Right cardiac atrium (tissue), 5 donors: ENCODE measurements at regions of chr15 and their contacts with region 1.

Region 1: GRCh38 chr15:73518180-73518862 is 75.4 kb downstream of the REC114 start:
- DNase-seq: peak in 2 of 3 donors; percentile 27 to 43
- ATAC-seq: no peak
- H3K4me3 ChIP-seq: no peak overlapping the region
- H3K27ac ChIP-seq: peak overlapping the region; percentile 97
- H3K4me1 ChIP-seq: no peaks in the 10 kb centered on the region
- H3K27me3 ChIP-seq: no peaks in the 10 kb centered on the region

Region 2: GRCh38 chr15:73375755-73376305 is 142.5 kb before region 1 on chr15:
- intact Hi-C with region 1: loop called in 1 of 4 experiments (anchors 10 kb)
- DNase-seq: peak in 2 of 3 donors; percentile 75 to 80
- ATAC-seq: peak; percentile 67 to 73
- H3K4me3 ChIP-seq: no peak overlapping the region
- H3K27ac ChIP-seq: peak overlapping the region; percentile 87
- H3K4me1 ChIP-seq: no peaks in the 10 kb centered on the region
- H3K27me3 ChIP-seq: no peaks in the 10 kb centered on the region

Region 3: GRCh38 chr15:73550190-73550589 is 31.9 kb after region 1 on chr15:
- intact Hi-C with region 1: no loop called
- DNase-seq: no peak
- ATAC-seq: no peak
- H3K4me3 ChIP-seq: no peak overlapping the region
- H3K27ac ChIP-seq: no peak overlapping the region
- H3K4me1 ChIP-seq: peaks cover 1% of the 10 kb centered on the region
- H3K27me3 ChIP-seq: no peaks in the 10 kb centered on the region

Region 4: DNA sequence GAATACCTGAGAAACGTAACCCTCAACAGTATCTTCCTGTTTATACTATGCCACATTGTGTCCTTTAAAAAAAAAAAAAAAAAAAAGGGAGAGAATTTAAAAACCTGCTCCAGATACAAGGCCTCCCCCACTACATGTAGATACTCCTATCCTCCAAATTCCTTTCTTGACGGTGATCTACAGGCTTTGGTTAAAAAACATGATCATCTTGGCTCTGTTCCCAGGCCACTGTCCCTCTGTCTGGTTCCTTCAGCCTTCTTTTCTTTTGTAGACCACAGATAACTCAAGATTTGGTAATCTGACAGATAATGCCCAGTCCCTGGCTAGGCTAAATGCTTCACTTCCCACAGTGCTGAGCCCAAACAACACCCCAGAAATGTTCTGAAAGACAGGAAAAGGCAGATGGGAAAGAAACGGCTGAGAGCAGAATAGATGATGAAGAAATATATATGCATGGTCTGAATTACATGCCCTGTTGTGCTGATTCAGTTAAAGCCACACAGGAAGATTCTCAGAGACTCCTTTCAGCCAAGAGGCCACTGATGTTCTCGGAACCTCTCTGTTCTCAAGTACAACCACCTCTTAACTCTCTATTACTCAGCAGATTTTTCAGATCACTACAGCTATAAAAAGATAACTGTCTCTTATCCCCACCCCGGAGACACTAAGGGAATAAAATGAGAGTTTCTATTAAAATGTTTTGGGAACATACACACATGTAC is 66.5 kb after region 1 on chr15:
- intact Hi-C with region 1: no loop called
- DNase-seq: no peak
- ATAC-seq: no peak
- H3K4me3 ChIP-seq: no peak overlapping the region
- H3K27ac ChIP-seq: no peak overlapping the region
- H3K4me1 ChIP-seq: no peaks in the 10 kb centered on the region
- H3K27me3 ChIP-seq: no peaks in the 10 kb centered on the region

Region 5: DNA sequence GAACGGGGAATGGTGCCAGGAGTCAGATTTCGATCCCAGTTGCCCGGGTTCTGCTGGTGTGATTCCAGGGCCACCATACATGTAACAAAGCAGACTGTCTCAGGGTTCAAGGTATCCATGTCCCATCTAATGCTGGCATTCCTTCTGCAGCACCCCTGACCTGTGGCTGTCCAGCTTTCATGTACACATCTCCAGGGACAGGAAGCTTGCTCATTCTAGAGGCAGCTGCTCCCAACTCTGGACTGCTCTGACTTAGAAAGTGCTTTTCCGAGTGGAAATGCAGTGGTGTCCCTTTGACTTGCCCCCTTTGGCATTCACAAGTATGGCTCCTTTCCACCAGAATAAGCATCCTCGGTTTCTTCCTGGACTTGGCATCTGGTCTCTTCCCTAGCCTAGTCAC is 507.1 kb after region 1 on chr15:
- intact Hi-C with region 1: no loop called
- DNase-seq: no peak
- ATAC-seq: peak in 1 of 2 donors; percentile 46
- H3K4me3 ChIP-seq: no peak overlapping the region
- H3K27ac ChIP-seq: no peak overlapping the region
- H3K4me1 ChIP-seq: peaks cover 4% of the 10 kb centered on the region
- H3K27me3 ChIP-seq: no peaks in the 10 kb centered on the region